ENCODE measurements at regions of chr11 and their contacts with region 1.

Region 1: DNA sequence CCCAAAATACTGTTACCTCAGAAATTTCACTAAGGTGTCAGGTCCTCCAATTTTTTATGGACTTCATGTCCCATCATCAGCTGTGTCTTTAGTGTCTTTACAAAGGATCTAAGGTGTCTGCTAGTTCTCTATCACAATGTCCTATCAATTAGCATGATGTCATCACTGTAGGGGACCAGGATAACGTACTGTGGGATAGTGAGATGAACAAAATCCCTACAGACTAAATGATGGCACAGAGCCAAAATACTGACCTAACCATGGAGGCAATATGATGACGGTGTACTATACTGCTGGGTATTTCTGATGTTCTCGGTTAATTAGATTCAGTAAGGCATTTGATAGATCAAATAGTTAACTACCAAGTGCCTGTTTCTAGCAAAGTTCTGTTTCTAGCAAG is 82.5 kb downstream of the SBF2 start:
- DNase-seq: no peak
- ATAC-seq: no peak

Region 2: GRCh38 chr11:10307442-10308207 is 96.2 kb after region 1 on chr11:
- intact Hi-C with region 1: loop called (anchors 5 kb)
- DNase-seq: peak; percentile 91
- ATAC-seq: peak; percentile 77